ENCODE measurements at regions of chr12 and their contacts with region 1.

Region 1: GRCh38 chr12:13211859-13212664 is 15.5 kb downstream of the EMP1 start:
- DNase-seq: no peak
- H3K4me3 ChIP-seq: no peak overlapping the region
- H3K27me3 ChIP-seq: no peaks in the 10 kb centered on the region
- CTCF ChIP-seq: peak; percentile 84

Region 2: DNA sequence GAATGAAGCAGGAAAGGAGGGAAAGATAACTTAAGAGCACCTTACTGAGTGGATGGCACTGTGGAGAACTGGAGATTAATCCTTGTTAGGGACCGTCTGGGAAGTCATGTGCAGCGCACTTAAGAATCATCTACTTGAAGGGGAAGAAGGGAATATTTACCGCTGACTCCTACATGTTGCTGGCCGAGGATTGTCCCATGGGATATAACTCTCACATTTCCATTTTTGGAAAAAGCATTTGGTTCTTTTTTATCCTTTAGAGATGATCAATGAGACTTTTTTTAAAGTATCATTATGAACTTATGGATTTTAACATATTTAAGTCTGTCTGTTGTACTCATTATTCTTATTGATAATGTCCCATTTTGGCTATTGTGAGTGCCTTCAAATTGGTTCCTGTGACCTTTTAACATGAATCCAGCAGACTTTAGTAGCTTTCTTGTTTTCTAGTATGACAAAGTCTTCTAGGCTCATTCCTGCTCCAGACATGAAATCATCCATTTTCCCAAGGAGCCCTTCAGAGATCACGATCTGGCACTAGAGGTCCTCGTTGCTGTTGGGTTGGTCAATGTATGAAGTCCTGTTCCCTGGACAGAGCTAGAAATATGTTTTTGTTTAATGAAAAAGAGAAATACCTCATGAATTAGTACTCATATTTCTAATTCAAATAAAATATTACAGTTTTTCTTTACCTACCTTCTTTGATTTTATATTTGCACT is 188.1 kb before region 1 on chr12:
- CTCF ChIA-PET with region 1: interaction called, 22 read pairs
- POLR2A ChIA-PET with region 1: no interaction called
- DNase-seq: no peak
- H3K4me3 ChIP-seq: no peak overlapping the region
- H3K27me3 ChIP-seq: 0 out of 2 replicates have a peak, but pooled peaks cover 2% of the 10 kb centered on the region
- CTCF ChIP-seq: peak; percentile 74

Region 3: DNA sequence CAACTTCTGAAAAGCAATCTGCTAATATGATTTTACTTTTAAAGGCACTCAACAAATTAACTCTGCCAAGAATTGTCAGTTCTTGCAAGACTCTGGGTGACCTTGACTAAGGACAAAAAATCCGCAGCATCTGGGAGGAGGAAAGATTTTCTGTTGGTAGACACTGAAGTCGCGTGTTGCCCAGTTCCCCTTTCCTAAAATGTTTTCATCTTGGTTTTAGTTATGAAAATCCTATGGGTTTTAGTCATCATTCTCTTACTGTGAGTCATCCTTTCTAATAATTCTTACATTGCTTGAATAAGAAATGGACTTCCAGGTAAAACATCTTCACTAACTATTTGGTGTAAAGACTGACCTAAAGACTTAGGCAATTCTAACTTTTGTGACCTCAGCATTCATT is 117.7 kb before region 1 on chr12:
- CTCF ChIA-PET with region 1: interaction called, 22 read pairs
- POLR2A ChIA-PET with region 1: no interaction called
- DNase-seq: no peak
- H3K4me3 ChIP-seq: no peak overlapping the region
- H3K27me3 ChIP-seq: no peaks in the 10 kb centered on the region
- CTCF ChIP-seq: no peak

Region 4: GRCh38 chr12:13179211-13180074 is 32.6 kb before region 1 on chr12:
- CTCF ChIA-PET with region 1: no interaction called
- POLR2A ChIA-PET with region 1: no interaction called
- DNase-seq: no peak
- H3K4me3 ChIP-seq: no peak overlapping the region
- H3K27me3 ChIP-seq: no peaks in the 10 kb centered on the region
- CTCF ChIP-seq: no peak

Region 5: GRCh38 chr12:13190275-13190674 is 21.8 kb before region 1 on chr12:
- CTCF ChIA-PET with region 1: no interaction called
- POLR2A ChIA-PET with region 1: no interaction called
- DNase-seq: no peak
- H3K4me3 ChIP-seq: no peak overlapping the region
- H3K27me3 ChIP-seq: no peaks in the 10 kb centered on the region
- CTCF ChIP-seq: no peak

Region 6: DNA sequence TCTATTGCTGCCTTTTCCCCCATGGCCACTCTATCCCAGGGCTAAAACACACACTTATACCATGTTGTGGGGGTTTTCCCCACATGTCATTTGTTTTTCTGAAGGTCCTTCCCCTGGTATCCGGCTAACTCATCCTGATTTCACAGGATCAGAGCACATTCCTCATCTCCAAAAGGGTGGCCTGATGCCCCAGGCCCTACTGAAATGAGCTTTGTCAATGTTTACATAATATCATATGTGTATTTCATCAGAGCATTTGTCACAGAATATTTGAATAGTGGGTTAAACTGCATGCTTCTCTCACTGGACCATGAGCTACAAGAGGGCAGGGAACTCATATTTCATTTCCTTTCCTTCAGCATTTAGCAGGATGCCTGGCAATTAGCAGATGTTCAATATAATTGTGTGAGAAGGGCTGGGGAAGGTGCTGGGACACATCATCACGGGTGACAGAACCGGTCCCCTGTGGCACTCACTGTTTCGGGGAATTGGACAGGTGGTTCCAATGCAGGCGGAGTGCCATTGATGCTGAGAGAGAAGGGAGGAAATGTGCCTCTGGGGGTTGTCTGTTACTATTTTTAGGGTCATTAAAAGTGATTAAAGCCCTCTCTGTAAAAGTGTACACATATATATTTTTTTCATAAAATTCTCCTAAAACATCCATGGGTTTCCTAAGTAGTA is 11.3 kb after region 1 on chr12:
- CTCF ChIA-PET with region 1: interaction called, 99 read pairs
- POLR2A ChIA-PET with region 1: no interaction called
- DNase-seq: peak; percentile 86
- H3K4me3 ChIP-seq: no peak overlapping the region
- H3K27me3 ChIP-seq: no peaks in the 10 kb centered on the region
- CTCF ChIP-seq: no peak

Region 7: GRCh38 chr12:13326076-13326475 is 114.0 kb after region 1 on chr12:
- CTCF ChIA-PET with region 1: no interaction called
- POLR2A ChIA-PET with region 1: no interaction called
- DNase-seq: no peak
- H3K4me3 ChIP-seq: no peak overlapping the region
- H3K27me3 ChIP-seq: 0 out of 2 replicates have a peak, but pooled peaks cover 2% of the 10 kb centered on the region
- CTCF ChIP-seq: no peak